Activated T-helper 2 cell treated with anti-CD3 and anti-CD28 coated beads, Interferon-gamma antibody, Interleukin-2, Interleukin-4, amounts not matched to agents 10 μg/mL and 5 μg/mL and 100 μg/mL, durations not matched to agents 14 hours and 24 hours and 36 hours (primary cell): ENCODE measurements at regions of chr17 and their contacts with region 1.

Region 1: GRCh38 chr17:8091033-8091687 is 3.6 kb upstream of the ALOX12B start:
- DNase-seq: no peak
- H3K4me3 Mint-ChIP-seq: no peak overlapping the region
- H3K27ac Mint-ChIP-seq: no peak overlapping the region
- H3K4me1 Mint-ChIP-seq: peaks cover 7% of the 10 kb centered on the region
- H3K27me3 Mint-ChIP-seq: peaks cover 23% of the 10 kb centered on the region

Region 2: DNA sequence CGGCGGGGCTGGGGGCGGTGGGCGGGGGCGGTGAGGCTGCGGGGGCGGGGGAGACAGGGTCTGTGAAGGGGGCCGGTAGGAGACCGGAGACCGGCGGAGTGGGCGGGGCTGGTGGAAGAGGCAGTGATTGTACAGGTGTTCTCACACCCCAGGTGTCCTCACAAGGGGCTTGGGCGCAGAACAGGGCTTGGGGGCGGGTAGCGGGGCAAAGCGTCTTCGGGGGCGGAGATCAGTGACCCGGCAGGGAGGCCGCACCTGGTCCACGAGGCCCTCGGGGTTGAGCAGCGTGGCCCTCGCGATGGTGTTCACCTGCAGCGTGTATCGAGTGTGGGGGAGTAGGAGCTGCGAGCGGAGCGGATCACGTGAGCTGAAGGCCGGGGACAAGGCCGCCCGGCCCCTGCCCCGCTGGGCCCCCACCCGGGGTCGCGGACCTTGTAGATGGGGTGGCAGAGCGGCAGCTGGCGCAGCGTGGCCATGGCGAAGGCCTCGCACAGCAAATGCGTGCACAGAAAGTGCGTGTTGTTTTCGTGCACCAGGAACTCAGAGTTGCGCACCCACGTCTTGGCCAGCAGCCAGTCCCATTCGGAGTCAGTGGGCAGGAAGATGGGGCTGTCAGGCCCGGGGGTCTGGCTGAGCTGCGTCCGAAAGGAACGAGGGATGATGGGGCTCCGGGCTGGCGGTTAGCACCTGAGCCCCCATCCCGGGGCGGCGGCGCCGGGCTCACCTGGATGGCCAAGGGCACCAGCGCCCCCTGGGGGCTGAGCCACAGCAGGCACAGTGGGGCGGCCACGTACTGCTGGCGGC is 18.7 kb after region 1 on chr17:
- intact Hi-C with region 1: loop called (anchors 2 kb)
- DNase-seq: peak; percentile 64
- H3K4me3 Mint-ChIP-seq: peak overlapping the region; percentile 23
- H3K27ac Mint-ChIP-seq: no peak overlapping the region
- H3K4me1 Mint-ChIP-seq: peaks cover 2% of the 10 kb centered on the region
- H3K27me3 Mint-ChIP-seq: peaks cover 33% of the 10 kb centered on the region